ENCODE measurements at regions of chr12 and their contacts with region 1.

Region 1: DNA sequence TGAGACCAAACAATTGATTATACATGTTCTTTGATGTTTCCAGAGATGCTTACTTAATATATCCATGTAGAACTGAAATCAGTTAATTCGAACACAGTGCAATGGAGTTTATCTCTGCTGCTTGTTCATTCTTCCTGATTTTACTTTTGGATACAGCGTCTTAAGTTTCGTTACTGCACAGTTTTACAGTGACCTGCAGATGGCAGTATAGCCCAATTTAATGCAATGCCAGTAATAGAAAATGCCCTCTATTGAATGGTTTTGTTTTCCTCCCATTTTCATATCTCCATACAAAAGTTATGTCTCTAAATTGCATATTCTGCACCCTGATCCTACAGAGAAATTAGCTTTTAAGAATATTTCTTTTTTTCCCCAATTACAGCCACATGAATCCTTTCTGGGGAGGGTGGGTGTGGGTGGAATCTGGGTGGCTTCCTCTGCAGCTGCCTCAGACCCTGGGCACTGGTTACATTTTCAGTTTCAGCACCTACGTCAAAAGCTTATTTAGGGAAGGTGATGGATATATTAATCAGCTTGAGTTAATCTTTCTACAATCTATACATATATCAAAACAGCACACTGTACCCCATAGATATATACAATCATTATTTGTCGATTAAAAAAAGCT is 101.1 kb upstream of the DCD start:
- DNase-seq: peak; percentile 46
- ATAC-seq: peak; percentile 71
- H3K4me3 Mint-ChIP-seq: no peak overlapping the region
- H3K27ac Mint-ChIP-seq: no peak overlapping the region
- H3K4me1 Mint-ChIP-seq: peaks cover 18% of the 10 kb centered on the region
- H3K27me3 Mint-ChIP-seq: peaks cover 2% of the 10 kb centered on the region

Region 2: GRCh38 chr12:54428050-54429013 is 321.0 kb before region 1 on chr12:
- CTCF ChIA-PET with region 1: no interaction called
- POLR2A ChIA-PET with region 1: no interaction called
- intact Hi-C with region 1: no loop called
- DNase-seq: peak; percentile 35
- ATAC-seq: no peak
- H3K4me3 Mint-ChIP-seq: no peak overlapping the region
- H3K27ac Mint-ChIP-seq: no peak overlapping the region
- H3K4me1 Mint-ChIP-seq: peaks cover 29% of the 10 kb centered on the region
- H3K27me3 Mint-ChIP-seq: peaks cover 3% of the 10 kb centered on the region

Region 3: GRCh38 chr12:54723379-54724256 is 25.7 kb before region 1 on chr12:
- CTCF ChIA-PET with region 1: interaction called, 23 read pairs
- POLR2A ChIA-PET with region 1: no interaction called
- intact Hi-C with region 1: no loop called
- DNase-seq: peak; percentile 30
- ATAC-seq: peak; percentile 51
- H3K4me3 Mint-ChIP-seq: no peak overlapping the region
- H3K27ac Mint-ChIP-seq: no peak overlapping the region
- H3K4me1 Mint-ChIP-seq: no peaks in the 10 kb centered on the region
- H3K27me3 Mint-ChIP-seq: peaks cover 3% of the 10 kb centered on the region

Region 4: DNA sequence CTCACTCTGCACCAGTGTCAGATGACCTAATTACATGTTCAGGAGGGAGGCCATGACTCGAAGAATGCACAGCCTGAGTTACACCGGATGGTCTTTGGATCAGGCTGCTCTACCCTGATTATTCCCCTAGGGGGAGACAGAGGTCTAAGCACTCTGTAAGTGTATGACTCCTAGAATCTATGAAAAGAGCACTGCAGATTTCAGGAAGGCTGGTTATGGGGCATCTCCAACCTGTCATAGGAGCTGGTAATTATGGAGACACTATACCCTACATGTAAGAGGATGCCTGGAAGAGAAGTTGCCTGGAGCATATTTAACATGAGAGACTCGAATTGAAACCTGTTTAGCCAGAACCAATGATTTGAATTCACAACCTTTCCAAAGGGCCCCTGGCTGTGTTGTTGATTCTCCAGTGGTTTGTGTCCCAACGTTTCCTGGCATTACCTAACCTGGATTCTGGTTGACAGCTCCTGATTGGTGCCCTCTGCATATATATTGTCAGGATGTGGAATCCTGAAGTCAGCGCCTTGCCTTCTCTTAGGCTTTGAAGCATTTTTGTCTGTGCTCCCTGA is 104.8 kb after region 1 on chr12 and contains the start of gene MUCL1:
- CTCF ChIA-PET with region 1: interaction called, 6 read pairs
- POLR2A ChIA-PET with region 1: no interaction called
- intact Hi-C with region 1: loop called (anchors 1 kb)
- DNase-seq: peak; percentile 82
- ATAC-seq: peak; percentile 95
- H3K4me3 Mint-ChIP-seq: no peak within 1 kb of the TSS
- H3K27ac Mint-ChIP-seq: no peak within 1 kb of the TSS
- H3K4me1 Mint-ChIP-seq: peaks cover 18% of the 10 kb centered on the region
- H3K27me3 Mint-ChIP-seq: no peaks in the 10 kb centered on the region
- total RNA-seq, gene MUCL1: not detected

Region 5: GRCh38 chr12:54984658-54985376 is 235.5 kb after region 1 on chr12 and contains the start of gene TESPA1:
- CTCF ChIA-PET with region 1: interaction called, 16 read pairs
- POLR2A ChIA-PET with region 1: no interaction called
- intact Hi-C with region 1: loop called in 1 of 2 experiments (anchors 5 kb)
- DNase-seq: peak; percentile 92
- ATAC-seq: peak; percentile 87
- H3K4me3 Mint-ChIP-seq: peak within 1 kb of the TSS; percentile 78
- H3K27ac Mint-ChIP-seq: peak within 1 kb of the TSS; percentile 95
- H3K4me1 Mint-ChIP-seq: peaks cover 64% of the 10 kb centered on the region
- H3K27me3 Mint-ChIP-seq: no peaks in the 10 kb centered on the region
- total RNA-seq, gene TESPA1: 81.0 to 107 TPM

Measured in activated CD4-positive, alpha-beta T cell treated with anti-CD3 and anti-CD28 coated beads for 36 hours (primary cell).